ENCODE measurements at regions of chr22 and their contacts with region 1.

Region 1: DNA sequence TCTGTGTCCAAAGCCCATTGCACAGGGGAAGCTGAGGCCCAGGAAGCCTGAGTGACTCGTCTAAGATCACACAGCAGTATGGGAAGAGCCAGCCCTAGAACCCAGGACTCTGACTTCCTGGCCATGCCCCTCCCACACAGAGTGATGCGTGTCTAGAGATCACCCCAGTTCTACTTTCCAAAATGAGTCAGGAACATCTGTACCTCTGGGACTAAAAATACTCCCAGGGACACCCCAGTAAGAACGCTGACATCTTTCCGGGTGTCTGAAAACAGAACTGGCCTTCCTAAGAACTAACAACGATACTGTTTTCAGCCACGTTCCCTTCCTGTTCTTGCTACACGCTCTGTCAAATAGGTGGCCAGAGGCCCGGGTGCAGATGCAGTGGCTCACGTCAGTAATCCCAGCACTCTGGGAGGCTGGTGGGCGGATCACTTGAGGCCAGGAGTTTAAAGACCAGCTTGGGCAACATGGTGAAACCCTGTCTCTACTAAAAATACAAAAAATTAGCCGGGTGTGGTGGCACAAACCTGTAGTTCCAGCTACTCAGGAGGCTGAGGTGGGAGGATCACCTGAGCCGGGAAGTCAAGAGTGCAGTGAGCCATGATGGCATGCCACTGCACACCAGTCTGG is 21.7 kb upstream of the PDGFB start:
- DNase-seq: peak; percentile 56 to 87
- H3K4me3 ChIP-seq: no peak overlapping the region
- H3K27ac ChIP-seq: peak overlapping the region; percentile 65
- H3K4me1 ChIP-seq: peaks cover 22% of the 10 kb centered on the region
- H3K27me3 ChIP-seq: no peaks in the 10 kb centered on the region
- CTCF ChIP-seq: no peak

Region 2: DNA sequence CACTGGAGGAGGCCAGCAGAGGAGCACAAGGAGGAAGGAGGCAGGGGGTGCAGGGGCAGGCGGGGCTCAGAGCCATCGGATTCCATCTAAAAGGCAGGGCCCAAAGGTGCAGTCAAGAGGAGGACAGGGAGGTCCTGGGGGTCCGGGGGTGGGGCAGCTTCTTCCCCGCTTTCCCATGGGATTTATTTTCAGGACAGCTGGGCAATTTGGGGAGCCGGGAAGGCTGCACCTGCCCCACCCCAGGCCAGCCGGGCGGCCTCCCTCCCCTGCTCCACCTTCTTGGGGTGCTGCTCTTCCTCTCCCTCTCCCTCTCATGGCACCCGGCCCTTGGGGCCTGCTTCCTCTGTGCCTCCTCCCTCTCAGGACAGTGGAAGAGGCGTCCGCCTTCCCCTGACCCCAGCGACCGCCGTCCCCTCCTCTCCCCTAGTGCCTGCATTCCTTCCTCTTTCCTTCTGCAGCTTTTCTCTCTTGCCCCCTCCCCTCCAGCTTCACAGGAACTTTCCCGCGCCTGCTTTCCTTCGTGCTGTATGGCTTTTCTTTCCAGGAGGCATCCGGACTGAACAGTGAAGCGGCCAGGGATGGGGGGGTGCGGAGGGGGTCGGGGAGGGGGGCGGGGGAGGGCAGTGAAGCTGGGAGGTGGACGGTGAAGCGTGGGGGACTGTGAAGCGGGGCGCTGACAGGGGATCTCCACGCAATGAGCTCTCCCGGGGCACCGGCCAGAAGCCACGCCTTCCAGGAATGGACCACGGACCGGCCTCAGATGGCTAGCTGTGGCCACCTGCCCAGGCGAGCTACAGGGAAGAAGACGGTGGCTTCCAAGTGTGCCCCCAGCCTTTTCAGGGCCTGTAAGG is 142.5 kb before region 1 on chr22:
- CTCF ChIA-PET with region 1: interaction called, 12 read pairs
- POLR2A ChIA-PET with region 1: no interaction called
- intact Hi-C with region 1: no loop called
- DNase-seq: no peak
- H3K4me3 ChIP-seq: no peak overlapping the region
- H3K27ac ChIP-seq: no peak overlapping the region
- H3K4me1 ChIP-seq: peaks cover 9% of the 10 kb centered on the region; the same call in 1 of the 2 replicates
- H3K27me3 ChIP-seq: no peaks in the 10 kb centered on the region
- CTCF ChIP-seq: no peak

Region 3: DNA sequence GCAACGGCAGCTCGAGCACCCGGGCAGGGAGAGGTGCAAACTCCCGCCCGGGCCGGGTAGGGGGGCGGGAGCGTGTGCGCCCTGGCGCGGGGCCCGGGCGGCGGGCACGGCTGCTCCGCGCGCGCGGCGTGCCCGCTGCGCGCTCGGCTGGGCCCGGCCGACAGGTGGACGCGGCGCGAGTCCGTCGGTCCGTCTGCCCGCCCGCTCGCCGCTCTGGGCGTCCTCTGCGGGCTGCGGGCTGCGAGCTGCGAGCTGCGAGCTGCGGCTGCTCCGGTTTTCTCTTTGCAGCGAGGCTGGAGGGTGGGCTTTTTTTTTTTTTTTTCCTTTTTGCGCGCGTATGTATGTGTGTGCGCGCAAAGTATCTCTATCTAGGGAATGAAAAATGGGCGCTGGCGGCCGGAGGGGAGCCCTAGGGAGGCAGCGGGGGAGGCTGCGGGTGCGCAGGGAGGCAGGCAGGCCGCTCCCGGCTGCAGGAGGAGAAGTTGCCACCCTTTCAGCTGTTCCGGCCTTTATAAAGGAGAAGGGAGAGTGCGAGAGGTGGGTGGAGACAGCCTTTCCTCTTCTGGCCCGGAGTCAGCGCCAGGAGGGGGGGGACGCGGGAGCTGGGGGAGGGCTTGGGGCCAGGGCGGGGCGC is 21.9 kb before region 1 on chr22 and contains the start of gene PDGFB:
- CTCF ChIA-PET with region 1: no interaction called
- POLR2A ChIA-PET with region 1: interaction called, 11 read pairs
- intact Hi-C with region 1: no loop called
- DNase-seq: peak; percentile 61 to 71
- H3K4me3 ChIP-seq: peak within 1 kb of the TSS; percentile 98
- H3K27ac ChIP-seq: 0 out of 2 replicates have a peak within 1 kb of the TSS, but pooled peaks have one; percentile 18
- H3K4me1 ChIP-seq: peaks cover 28% of the 10 kb centered on the region
- H3K27me3 ChIP-seq: no peaks in the 10 kb centered on the region
- CTCF ChIP-seq: 0 out of 2 replicates have a peak, but pooled peaks have one; percentile 9
- total RNA-seq, gene PDGFB: 35.5 and 39.7 TPM in 2 replicates

Region 4: GRCh38 chr22:39292561-39293098 is 26.1 kb after region 1 on chr22:
- CTCF ChIA-PET with region 1: no interaction called
- POLR2A ChIA-PET with region 1: no interaction called
- intact Hi-C with region 1: loop called (anchors 2 kb)
- DNase-seq: peak; percentile 96 to 97
- H3K4me3 ChIP-seq: no peak overlapping the region
- H3K27ac ChIP-seq: peak overlapping the region; percentile 84
- H3K4me1 ChIP-seq: peaks cover 76% of the 10 kb centered on the region
- H3K27me3 ChIP-seq: no peaks in the 10 kb centered on the region
- CTCF ChIP-seq: no peak

Region 5: DNA sequence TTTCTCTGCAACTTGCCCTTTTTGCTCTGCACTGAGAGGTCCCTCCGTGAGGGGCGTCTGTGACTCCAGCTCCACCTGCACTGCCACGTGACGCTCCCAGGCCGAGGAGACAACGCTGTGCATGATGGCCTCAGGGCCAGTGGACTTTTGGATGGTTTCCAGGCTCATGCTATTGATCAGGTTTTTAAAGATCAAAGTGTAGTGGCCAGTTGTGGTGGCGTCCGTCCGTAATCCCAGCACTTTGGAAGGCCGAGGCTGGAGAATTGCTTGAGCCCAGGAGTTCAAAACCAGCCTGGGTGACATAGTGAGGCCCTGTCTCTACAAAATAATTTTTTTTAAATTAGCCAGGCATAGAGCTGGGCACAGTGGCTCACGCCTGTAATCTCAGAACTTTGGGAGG is 36.8 kb after region 1 on chr22:
- CTCF ChIA-PET with region 1: no interaction called
- POLR2A ChIA-PET with region 1: no interaction called
- intact Hi-C with region 1: no loop called
- DNase-seq: no peak
- H3K4me3 ChIP-seq: no peak overlapping the region
- H3K27ac ChIP-seq: no peak overlapping the region
- H3K4me1 ChIP-seq: peaks cover 46% of the 10 kb centered on the region
- H3K27me3 ChIP-seq: no peaks in the 10 kb centered on the region
- CTCF ChIP-seq: no peak